PC-9 (cell line): ENCODE measurements at regions of chr14 and their contacts with region 1.

Region 1: GRCh38 chr14:62654641-62655040 is 390.6 kb downstream of the KCNH5 start:
- DNase-seq: no peak
- H3K4me3 ChIP-seq: no peak overlapping the region
- H3K27ac ChIP-seq: no peak overlapping the region
- H3K4me1 ChIP-seq: no peaks in the 10 kb centered on the region
- H3K27me3 ChIP-seq: no peaks in the 10 kb centered on the region
- CTCF ChIP-seq: no peak

Region 2: DNA sequence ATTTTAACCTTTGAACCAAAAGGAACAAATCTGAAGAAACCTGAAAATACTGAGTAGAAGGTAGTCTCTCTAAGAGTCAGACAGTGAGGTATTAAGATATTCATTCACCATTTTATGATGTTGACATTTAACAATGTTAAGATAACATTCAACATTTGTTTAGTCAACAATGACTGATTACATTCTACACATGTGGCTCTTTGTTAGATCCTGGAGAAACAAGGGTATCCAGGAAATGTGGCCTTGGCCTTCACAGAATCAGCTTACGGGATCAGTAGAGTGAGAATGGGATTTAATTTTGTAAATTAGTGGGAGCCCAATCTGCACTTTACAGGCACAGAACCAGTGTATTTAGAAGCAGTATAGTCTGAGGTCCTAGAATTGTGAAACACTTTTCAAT is 35.1 kb after region 1 on chr14:
- CTCF ChIA-PET with region 1: no interaction called
- POLR2A ChIA-PET with region 1: no interaction called
- intact Hi-C with region 1: no loop called
- DNase-seq: no peak
- H3K4me3 ChIP-seq: no peak overlapping the region
- H3K27ac ChIP-seq: no peak overlapping the region
- H3K4me1 ChIP-seq: peaks cover 23% of the 10 kb centered on the region
- H3K27me3 ChIP-seq: no peaks in the 10 kb centered on the region
- CTCF ChIP-seq: no peak

Region 3: GRCh38 chr14:63296060-63296563 is 641.5 kb after region 1 on chr14:
- CTCF ChIA-PET with region 1: no interaction called
- POLR2A ChIA-PET with region 1: interaction called, 24 read pairs
- intact Hi-C with region 1: no loop called
- DNase-seq: no peak
- H3K4me3 ChIP-seq: no peak overlapping the region
- H3K27ac ChIP-seq: no peak overlapping the region
- H3K4me1 ChIP-seq: no peaks in the 10 kb centered on the region
- H3K27me3 ChIP-seq: no peaks in the 10 kb centered on the region
- CTCF ChIP-seq: no peak